IMR-90 (cell line): ENCODE measurements at regions of chr12 and their contacts with region 1.

Region 1: DNA sequence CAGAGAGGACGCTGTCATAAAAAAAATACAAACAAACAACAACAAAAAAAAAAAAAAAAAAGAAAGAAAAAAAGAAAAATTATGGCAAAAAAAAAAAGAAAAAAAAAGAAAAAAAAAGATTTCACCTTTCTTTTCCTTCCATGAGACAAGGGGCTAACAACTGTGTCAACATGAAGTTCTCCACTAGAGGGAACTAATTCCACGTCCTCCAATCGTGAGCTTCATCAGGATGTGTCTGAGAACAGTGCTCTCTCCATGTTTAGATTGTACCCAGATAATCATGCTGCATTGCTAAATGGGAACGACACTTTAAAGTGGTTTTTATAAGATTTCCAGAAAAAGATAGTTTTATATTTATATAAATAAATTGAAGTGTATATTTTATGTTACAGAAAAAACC is 96.2 kb upstream of the PTPRB start:
- DNase-seq: peak; percentile 67
- ATAC-seq: peak; percentile 90
- H3K4me3 ChIP-seq: no peak overlapping the region
- H3K27ac ChIP-seq: no peak overlapping the region
- H3K4me1 ChIP-seq: no peaks in the 10 kb centered on the region
- H3K27me3 ChIP-seq: no peaks in the 10 kb centered on the region
- CTCF ChIP-seq: peak; percentile 72
- POLR2A ChIP-seq: no peak
- RAD21 ChIP-seq: peak; percentile 72

Region 2: DNA sequence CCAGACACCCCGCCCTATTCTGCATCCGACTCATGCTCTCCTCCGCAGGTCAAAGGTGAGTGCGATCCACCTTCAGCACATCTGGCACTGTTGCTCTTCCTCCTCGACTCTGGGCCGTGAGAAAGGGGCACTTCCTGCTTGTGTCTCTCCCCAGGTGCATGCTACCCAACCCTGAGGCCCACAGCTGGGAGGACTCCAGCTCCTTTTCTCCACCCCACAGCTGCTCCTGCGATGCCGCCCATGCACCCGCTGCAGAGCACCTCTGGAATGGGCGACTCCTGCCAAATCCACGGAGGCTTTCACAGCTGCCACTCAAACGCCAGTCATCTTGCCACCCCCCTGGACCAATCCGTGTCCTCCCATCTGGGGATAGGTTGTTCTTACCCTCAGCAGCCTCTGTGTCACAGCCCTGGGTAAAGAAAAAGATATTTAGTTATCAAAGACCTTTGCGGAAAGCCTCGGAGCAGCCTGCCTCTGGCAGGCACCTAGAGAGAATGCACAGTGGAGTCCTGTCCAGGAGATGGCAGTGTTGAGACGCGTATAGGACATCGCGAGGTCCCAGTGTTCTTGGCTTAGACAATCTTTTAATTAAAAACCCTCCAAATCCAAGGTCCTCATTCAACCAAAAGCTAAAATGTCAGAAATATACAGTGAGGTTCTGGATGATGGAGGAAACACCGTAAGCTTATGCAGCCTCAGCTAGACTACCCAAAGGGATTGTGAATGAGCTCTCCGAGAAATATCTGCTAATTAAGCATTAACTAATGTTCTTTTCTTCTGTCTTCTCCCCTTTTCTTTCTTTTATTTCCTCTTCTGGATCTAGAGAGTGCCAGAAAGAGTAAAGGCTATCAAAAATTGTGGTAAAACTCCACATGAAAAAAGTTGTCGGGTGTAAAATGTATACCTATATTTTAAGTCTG is 854.1 kb before region 1 on chr12:
- CTCF ChIA-PET with region 1: interaction called, 10 read pairs
- POLR2A ChIA-PET with region 1: no interaction called
- dilution Hi-C with region 1: no loop called
- in situ Hi-C with region 1: loop called (anchors 5 kb)
- intact Hi-C with region 1: loop called (anchors 1 kb)
- DNase-seq: peak; percentile 69
- ATAC-seq: peak; percentile 97
- H3K4me3 ChIP-seq: no peak overlapping the region
- H3K27ac ChIP-seq: no peak overlapping the region
- H3K4me1 ChIP-seq: no peaks in the 10 kb centered on the region
- H3K27me3 ChIP-seq: peaks cover 7% of the 10 kb centered on the region; the same call in 1 of the 2 replicates
- CTCF ChIP-seq: peak; percentile 93
- POLR2A ChIP-seq: no peak
- RAD21 ChIP-seq: peak; percentile 96

Region 3: GRCh38 chr12:70290116-70290515 is 443.3 kb before region 1 on chr12:
- CTCF ChIA-PET with region 1: no interaction called
- POLR2A ChIA-PET with region 1: no interaction called
- dilution Hi-C with region 1: no loop called
- in situ Hi-C with region 1: no loop called
- intact Hi-C with region 1: no loop called
- DNase-seq: no peak
- ATAC-seq: no peak
- H3K4me3 ChIP-seq: no peak overlapping the region
- H3K27ac ChIP-seq: no peak overlapping the region
- H3K4me1 ChIP-seq: no peaks in the 10 kb centered on the region
- H3K27me3 ChIP-seq: no peaks in the 10 kb centered on the region
- CTCF ChIP-seq: no peak
- POLR2A ChIP-seq: no peak
- RAD21 ChIP-seq: no peak

Region 4: GRCh38 chr12:70590051-70590450 is 143.3 kb before region 1 on chr12:
- CTCF ChIA-PET with region 1: no interaction called
- POLR2A ChIA-PET with region 1: no interaction called
- dilution Hi-C with region 1: no loop called
- in situ Hi-C with region 1: no loop called
- intact Hi-C with region 1: loop called (anchors 1 kb)
- DNase-seq: peak; percentile 77
- ATAC-seq: peak; percentile 94
- H3K4me3 ChIP-seq: no peak overlapping the region
- H3K27ac ChIP-seq: no peak overlapping the region
- H3K4me1 ChIP-seq: no peaks in the 10 kb centered on the region
- H3K27me3 ChIP-seq: no peaks in the 10 kb centered on the region
- CTCF ChIP-seq: peak; percentile 94
- POLR2A ChIP-seq: no peak
- RAD21 ChIP-seq: peak; percentile 93

Region 5: DNA sequence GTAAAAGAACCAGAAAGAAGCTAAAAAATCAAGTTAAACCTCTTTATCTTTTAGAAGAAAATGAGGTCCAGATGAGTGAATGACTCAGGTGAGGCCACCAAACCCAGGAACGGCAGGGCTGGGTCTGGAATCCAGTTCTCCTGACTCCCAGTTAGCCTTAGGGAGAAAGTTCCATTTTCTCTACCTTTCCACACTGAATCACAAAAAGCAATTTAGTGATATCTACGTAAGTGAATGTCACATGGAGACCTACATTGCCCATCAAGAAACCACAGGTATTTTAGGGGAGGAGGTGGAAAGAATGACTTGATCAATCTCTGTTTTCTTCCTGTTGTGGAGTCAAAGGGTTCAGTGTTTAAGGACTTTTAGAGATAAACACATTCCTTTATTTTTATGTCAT is 10.7 kb after region 1 on chr12:
- CTCF ChIA-PET with region 1: interaction called, 15 read pairs
- POLR2A ChIA-PET with region 1: no interaction called
- dilution Hi-C with region 1: no loop called
- in situ Hi-C with region 1: no loop called
- intact Hi-C with region 1: no loop called
- DNase-seq: no peak
- ATAC-seq: no peak
- H3K4me3 ChIP-seq: no peak overlapping the region
- H3K27ac ChIP-seq: no peak overlapping the region
- H3K4me1 ChIP-seq: no peaks in the 10 kb centered on the region
- H3K27me3 ChIP-seq: no peaks in the 10 kb centered on the region
- CTCF ChIP-seq: no peak
- POLR2A ChIP-seq: no peak
- RAD21 ChIP-seq: no peak

Region 6: GRCh38 chr12:70971001-70971794 is 237.8 kb after region 1 on chr12:
- CTCF ChIA-PET with region 1: no interaction called
- POLR2A ChIA-PET with region 1: no interaction called
- dilution Hi-C with region 1: no loop called
- in situ Hi-C with region 1: no loop called
- intact Hi-C with region 1: no loop called
- DNase-seq: no peak
- ATAC-seq: no peak
- H3K4me3 ChIP-seq: no peak overlapping the region
- H3K27ac ChIP-seq: no peak overlapping the region
- H3K4me1 ChIP-seq: no peaks in the 10 kb centered on the region
- H3K27me3 ChIP-seq: no peaks in the 10 kb centered on the region
- CTCF ChIP-seq: no peak
- POLR2A ChIP-seq: no peak
- RAD21 ChIP-seq: no peak

Region 7: GRCh38 chr12:71014180-71014785 is 280.9 kb after region 1 on chr12:
- CTCF ChIA-PET with region 1: no interaction called
- POLR2A ChIA-PET with region 1: no interaction called
- dilution Hi-C with region 1: no loop called
- in situ Hi-C with region 1: no loop called
- intact Hi-C with region 1: loop called (anchors 1 kb)
- DNase-seq: peak; percentile 21
- ATAC-seq: peak; percentile 51; the same call in 1 of the 2 replicates
- H3K4me3 ChIP-seq: no peak overlapping the region
- H3K27ac ChIP-seq: no peak overlapping the region
- H3K4me1 ChIP-seq: no peaks in the 10 kb centered on the region
- H3K27me3 ChIP-seq: no peaks in the 10 kb centered on the region
- CTCF ChIP-seq: peak; percentile 40; the same call in 1 of the 2 replicates
- POLR2A ChIP-seq: no peak
- RAD21 ChIP-seq: peak; percentile 42

Region 8: GRCh38 chr12:71392521-71393145 is 659.2 kb after region 1 on chr12:
- CTCF ChIA-PET with region 1: interaction called, 7 read pairs
- POLR2A ChIA-PET with region 1: no interaction called
- dilution Hi-C with region 1: no loop called
- in situ Hi-C with region 1: loop called (anchors 25 kb)
- intact Hi-C with region 1: loop called (anchors 2 kb)
- DNase-seq: peak; percentile 70
- ATAC-seq: peak; percentile 97
- H3K4me3 ChIP-seq: no peak overlapping the region
- H3K27ac ChIP-seq: no peak overlapping the region
- H3K4me1 ChIP-seq: no peaks in the 10 kb centered on the region
- H3K27me3 ChIP-seq: no peaks in the 10 kb centered on the region
- CTCF ChIP-seq: peak; percentile 67
- POLR2A ChIP-seq: no peak
- RAD21 ChIP-seq: peak; percentile 41